ENCODE measurements at regions of chr7 and their contacts with region 1.

Region 1: DNA sequence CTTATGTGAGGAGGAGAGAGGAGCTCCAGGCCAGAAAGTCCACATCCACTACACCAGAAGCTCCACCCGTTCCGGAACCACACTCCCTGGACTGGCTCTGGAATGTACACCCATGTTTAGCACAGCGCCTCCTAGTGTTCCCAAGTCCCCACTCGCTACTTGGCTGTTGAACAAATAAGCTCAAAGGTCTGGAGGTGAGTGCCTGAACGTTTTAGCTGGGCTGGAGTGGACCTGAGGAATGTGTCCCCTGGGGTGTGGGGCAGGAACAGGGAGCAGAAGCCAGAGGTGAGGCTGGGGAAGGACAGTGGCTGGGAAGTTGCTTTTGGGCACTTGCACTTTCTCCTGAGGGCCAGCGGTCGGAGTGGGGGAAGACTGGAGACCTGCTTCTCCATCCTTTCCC is 164.1 kb upstream of the CDCA7L start:
- DNase-seq: peak in 1 of 2 experiments; percentile 67
- H3K4me3 ChIP-seq: no peak overlapping the region
- H3K4me1 ChIP-seq: no peaks in the 10 kb centered on the region
- H3K27me3 ChIP-seq: no peaks in the 10 kb centered on the region

Region 2: DNA sequence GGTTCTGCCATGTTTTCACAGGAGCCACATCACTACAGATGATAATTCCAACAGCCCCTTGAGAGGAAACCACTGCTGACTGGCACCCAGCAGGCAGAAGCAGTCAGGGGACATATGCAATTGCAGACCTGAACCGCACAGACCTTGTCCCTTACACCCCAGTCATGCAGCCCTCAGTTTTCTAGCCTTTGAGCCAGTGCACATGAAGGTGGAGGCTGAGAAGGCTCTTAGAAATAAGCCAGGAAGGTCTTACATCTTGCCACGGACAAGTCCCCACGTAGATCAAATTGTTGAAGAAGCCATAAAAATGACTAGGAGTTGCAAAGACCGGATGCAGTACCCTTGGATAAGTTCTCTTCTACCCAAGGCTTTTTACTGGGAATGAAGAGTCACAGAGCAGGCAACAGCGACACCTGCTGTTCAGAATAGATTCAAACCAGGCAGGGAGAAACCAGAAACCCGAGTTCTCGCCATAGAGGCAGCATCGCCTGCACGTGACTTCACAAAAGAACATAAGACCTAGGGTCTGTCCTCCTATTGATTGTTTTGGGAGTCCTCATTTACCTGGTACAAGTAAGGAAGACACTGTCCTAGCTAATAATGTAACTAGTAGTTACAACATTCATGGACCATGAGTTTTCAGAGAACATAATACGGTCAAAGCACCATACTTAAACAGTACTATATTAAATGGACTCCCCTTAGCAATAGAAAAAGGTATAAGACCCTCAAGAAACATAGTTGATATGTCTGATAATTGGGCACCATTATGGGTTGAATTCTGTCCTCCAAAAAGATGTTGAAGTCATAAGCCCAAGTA is 379.1 kb after region 1 on chr7:
- in situ Hi-C with region 1: loop called (anchors 5 kb)
- DNase-seq: peak; percentile 61 to 84
- H3K4me3 ChIP-seq: no peak overlapping the region
- H3K4me1 ChIP-seq: no peaks in the 10 kb centered on the region
- H3K27me3 ChIP-seq: no peaks in the 10 kb centered on the region